KBM-7 (cell line): ENCODE measurements at regions of chr12 and their contacts with region 1.

Region 1: GRCh38 chr12:3777206-3777809 is 24.4 kb upstream of the CRACR2A start:
- DNase-seq: peak; percentile 52

Region 2: GRCh38 chr12:3299929-3300832 is 477.1 kb before region 1 on chr12:
- in situ Hi-C with region 1: loop called (anchors 25 kb)
- DNase-seq: peak; percentile 79

Region 3: GRCh38 chr12:3491938-3492792 is 285.1 kb before region 1 on chr12:
- in situ Hi-C with region 1: no loop called
- DNase-seq: peak; percentile 43

Region 4: GRCh38 chr12:3743803-3744202 is 33.5 kb before region 1 on chr12:
- in situ Hi-C with region 1: no loop called
- DNase-seq: no peak

Region 5: DNA sequence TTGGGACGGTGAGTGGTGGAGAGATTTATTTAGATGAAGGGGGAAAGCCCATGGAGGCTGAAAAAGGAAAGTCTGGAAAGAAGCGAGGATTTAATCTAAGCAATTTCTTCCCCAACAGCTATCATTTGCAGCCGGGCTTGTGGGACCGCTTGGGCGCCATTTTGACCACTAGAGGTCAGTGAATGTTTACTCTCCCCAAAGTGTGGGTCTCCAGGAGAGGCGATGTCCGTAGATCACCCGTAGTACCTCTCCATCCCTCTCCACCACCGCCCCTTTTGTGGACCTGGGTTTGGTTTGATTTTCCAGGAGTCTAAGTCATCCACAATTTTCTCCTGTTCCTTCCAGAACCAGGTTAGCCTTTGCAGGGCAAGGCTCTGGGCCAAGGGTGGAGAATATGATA is 187.1 kb after region 1 on chr12:
- in situ Hi-C with region 1: no loop called
- DNase-seq: peak; percentile 17

Region 6: GRCh38 chr12:4135919-4136605 is 358.8 kb after region 1 on chr12:
- in situ Hi-C with region 1: no loop called
- DNase-seq: peak; percentile 83